ENCODE measurements at regions of chr10 and their contacts with region 1.

Region 1: GRCh38 chr10:24463611-24464426 is 254.9 kb downstream of the KIAA1217 start:
- DNase-seq: peak; percentile 96
- ATAC-seq: peak; percentile 54
- H3K4me3 ChIP-seq: peak overlapping the region; percentile 53
- H3K27ac ChIP-seq: peak overlapping the region; percentile 99
- H3K4me1 ChIP-seq: peaks cover 48% of the 10 kb centered on the region
- H3K27me3 ChIP-seq: no peaks in the 10 kb centered on the region
- CTCF ChIP-seq: no peak

Region 2: DNA sequence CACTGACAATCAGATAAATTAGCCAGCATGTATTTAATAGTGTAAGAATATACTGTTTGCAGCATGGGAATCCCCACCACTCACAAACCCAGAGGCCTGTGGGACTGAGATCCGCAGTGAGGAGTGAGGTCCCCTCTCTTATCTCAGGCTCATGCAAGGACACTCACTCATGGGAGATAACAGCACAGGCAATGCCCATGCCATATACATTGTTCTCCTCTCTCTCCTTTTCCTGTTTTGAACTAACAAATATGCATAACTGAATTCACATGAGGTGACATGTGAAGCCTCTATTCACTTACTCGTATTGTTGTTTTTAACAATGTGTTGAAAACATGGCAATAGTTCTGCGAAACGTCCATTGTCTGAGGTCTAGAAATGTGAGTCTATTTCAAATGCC is 29.3 kb after region 1 on chr10:
- CTCF ChIA-PET with region 1: no interaction called
- POLR2A ChIA-PET with region 1: no interaction called
- intact Hi-C with region 1: no loop called
- DNase-seq: no peak
- ATAC-seq: no peak
- H3K4me3 ChIP-seq: no peak overlapping the region
- H3K27ac ChIP-seq: no peak overlapping the region
- H3K4me1 ChIP-seq: peaks cover 29% of the 10 kb centered on the region
- H3K27me3 ChIP-seq: no peaks in the 10 kb centered on the region
- CTCF ChIP-seq: no peak

Region 3: DNA sequence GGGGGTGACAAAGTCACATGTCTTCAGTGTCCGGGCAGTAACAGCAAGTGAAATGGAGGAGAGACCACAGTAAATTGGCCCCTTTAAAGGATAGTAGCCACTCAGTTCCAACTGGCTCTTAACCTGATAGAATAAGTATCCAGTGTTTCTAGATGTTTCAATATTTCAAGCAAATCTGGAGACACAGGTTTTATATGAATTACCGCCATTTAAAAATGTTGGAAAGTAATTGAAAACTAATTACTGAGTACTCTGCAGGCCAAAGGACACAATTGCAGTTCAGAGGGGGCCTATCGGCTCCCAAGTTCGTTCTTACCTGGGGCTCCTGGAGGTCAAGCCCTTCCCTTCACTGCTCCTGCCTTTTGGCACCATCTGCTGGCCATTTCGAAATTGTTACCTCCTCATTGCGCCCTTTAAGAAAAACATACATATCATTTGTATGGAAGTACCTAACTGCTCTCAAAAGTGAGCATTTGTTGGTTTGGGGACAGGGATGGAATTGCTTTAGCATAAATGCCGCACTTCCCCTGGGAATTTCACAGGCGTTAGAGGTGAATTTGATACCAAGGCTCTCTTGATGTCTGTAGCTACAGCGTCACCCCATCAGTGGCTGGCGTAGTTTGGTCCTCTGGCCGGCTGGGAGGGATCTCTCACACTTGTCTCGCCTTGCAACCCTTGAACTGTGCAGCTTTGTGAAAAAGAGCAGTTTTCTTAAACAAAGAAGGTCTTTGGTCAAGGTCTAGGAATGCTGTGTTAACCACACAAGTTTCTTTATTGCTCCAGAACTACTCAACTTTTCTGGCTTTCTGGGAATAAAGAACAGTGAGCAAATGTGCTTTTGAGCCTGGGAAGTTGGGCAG is 39.9 kb after region 1 on chr10:
- CTCF ChIA-PET with region 1: no interaction called
- POLR2A ChIA-PET with region 1: no interaction called
- intact Hi-C with region 1: loop called (anchors 1 kb)
- DNase-seq: peak; percentile 69
- ATAC-seq: peak; percentile 55
- H3K4me3 ChIP-seq: no peak overlapping the region
- H3K27ac ChIP-seq: no peak overlapping the region
- H3K4me1 ChIP-seq: no peaks in the 10 kb centered on the region
- H3K27me3 ChIP-seq: no peaks in the 10 kb centered on the region
- CTCF ChIP-seq: peak; percentile 85

Region 4: GRCh38 chr10:24920907-24921881 is 457.4 kb after region 1 on chr10:
- CTCF ChIA-PET with region 1: no interaction called
- POLR2A ChIA-PET with region 1: interaction called, 10 read pairs
- intact Hi-C with region 1: no loop called
- DNase-seq: peak; percentile 73
- ATAC-seq: peak; percentile 78
- H3K4me3 ChIP-seq: no peak overlapping the region
- H3K27ac ChIP-seq: peak overlapping the region; percentile 87
- H3K4me1 ChIP-seq: peaks cover 14% of the 10 kb centered on the region
- H3K27me3 ChIP-seq: no peaks in the 10 kb centered on the region
- CTCF ChIP-seq: no peak